ENCODE measurements at regions of chr5 and their contacts with region 1.

Region 1: GRCh38 chr5:63613442-63613841 is 348.8 kb downstream of the HTR1A start:
- DNase-seq: peak; percentile 56
- ATAC-seq: peak; percentile 66
- H3K4me3 ChIP-seq: no peak overlapping the region
- H3K27ac ChIP-seq: no peak overlapping the region
- H3K4me1 ChIP-seq: no peaks in the 10 kb centered on the region; the same call in 1 of the 2 replicates
- H3K27me3 ChIP-seq: no peaks in the 10 kb centered on the region
- CTCF ChIP-seq: no peak

Region 2: DNA sequence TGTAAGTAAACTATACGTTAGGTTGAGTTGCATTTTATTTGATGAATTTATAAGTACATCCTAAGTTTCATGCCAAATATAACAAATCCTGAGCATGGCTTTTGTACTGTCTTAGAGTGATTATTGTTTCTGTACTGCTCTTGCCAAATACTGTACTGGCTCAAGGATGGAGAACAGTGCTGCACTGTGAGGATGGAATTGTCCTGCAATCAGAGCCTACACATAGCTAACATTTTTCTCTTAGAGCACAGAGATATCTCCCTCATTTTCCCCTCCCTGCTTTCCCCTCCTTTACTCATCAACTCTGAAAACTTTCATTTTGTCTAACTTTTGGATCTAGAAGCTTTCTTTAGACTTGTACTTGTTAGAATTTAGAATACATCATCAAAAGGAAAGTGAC is 1006.6 kb before region 1 on chr5:
- CTCF ChIA-PET with region 1: no interaction called
- POLR2A ChIA-PET with region 1: no interaction called
- intact Hi-C with region 1: no loop called
- DNase-seq: no peak
- ATAC-seq: peak; percentile 22
- H3K4me3 ChIP-seq: no peak overlapping the region
- H3K27ac ChIP-seq: no peak overlapping the region
- H3K4me1 ChIP-seq: no peaks in the 10 kb centered on the region
- H3K27me3 ChIP-seq: no peaks in the 10 kb centered on the region
- CTCF ChIP-seq: no peak

Region 3: DNA sequence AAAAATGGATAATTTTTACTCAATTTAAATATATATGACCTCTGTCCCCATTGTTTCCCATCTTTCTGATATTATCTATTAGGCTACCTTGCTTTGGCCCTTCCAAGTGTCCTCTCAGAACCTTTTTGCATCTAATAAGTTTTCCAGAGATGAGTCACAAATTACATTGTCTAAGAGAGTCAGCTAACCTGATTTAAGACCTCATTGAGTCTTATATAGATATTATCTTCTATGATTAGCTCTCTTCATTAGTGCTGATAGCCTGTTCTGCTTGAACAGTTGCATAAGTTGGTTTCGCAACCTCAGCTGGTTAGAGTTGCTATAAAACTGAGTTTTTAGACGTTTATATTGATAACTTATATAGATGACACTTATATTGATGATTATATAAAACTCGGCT is 411.7 kb before region 1 on chr5:
- CTCF ChIA-PET with region 1: no interaction called
- POLR2A ChIA-PET with region 1: no interaction called
- intact Hi-C with region 1: no loop called
- DNase-seq: no peak
- ATAC-seq: no peak
- H3K4me3 ChIP-seq: no peak overlapping the region
- H3K27ac ChIP-seq: no peak overlapping the region
- H3K4me1 ChIP-seq: no peaks in the 10 kb centered on the region
- H3K27me3 ChIP-seq: no peaks in the 10 kb centered on the region
- CTCF ChIP-seq: no peak

Region 4: DNA sequence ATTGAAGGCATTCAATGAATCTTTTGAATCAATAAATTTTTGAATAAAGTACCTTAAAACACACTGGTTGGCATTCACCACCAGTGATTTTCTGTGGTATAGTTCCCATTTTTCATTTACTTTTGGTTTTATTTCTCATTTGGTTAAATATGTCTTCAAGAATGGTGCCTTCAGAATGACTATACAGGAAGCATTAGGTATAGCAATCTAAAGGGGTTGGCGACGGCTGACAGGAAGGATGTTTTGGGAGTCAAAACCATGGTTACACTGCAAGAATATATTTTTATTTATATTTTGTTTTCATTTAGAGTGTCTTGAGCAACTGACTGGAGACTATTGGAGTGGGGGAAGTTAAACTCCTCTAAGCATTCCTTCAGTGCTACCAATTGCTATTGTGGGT is 113.1 kb after region 1 on chr5:
- CTCF ChIA-PET with region 1: no interaction called
- POLR2A ChIA-PET with region 1: no interaction called
- intact Hi-C with region 1: loop called (anchors 5 kb)
- DNase-seq: no peak
- ATAC-seq: no peak
- H3K4me3 ChIP-seq: no peak overlapping the region
- H3K27ac ChIP-seq: no peak overlapping the region
- H3K4me1 ChIP-seq: no peaks in the 10 kb centered on the region
- H3K27me3 ChIP-seq: no peaks in the 10 kb centered on the region
- CTCF ChIP-seq: no peak

Measured in PC-3 (cell line).